Sigmoid colon (tissue), 7 donors: ENCODE measurements at regions of chr3 and their contacts with region 1.

Region 1: DNA sequence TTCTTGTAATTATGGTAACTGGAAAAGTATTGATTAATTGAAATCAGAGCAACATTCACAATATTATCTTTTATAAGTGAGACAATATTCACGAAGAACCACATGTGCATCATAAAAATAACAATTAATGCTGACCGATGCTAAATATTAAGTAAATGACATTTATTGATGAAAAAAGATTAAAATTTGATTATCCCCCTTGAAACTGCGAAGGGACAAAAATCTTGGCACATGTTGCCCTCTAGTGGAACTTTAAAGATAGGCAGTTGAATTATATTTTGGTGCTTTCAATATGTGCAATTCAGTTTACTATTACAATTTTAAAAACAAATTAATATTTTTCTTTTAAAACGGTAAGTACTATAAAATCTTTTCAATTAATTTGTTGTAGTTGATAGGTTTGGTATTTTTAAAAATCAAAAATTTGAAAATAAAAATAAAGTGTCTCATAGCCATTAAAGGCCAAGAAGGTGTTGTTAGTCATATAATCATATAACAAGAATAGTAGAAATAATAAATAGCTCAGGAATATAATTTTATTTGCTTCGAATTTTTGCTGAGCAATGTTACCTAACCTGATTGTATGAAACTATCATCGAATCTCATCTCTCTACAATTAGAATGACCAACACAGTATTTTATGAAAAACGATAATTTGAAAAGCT is 270.2 kb downstream of the ROBO1 start:
- DNase-seq: no peak
- H3K4me3 ChIP-seq: no peak overlapping the region
- H3K27ac ChIP-seq: no peak overlapping the region
- H3K4me1 ChIP-seq: no peaks in the 10 kb centered on the region
- H3K27me3 ChIP-seq: no peaks in the 10 kb centered on the region
- CTCF ChIP-seq: peak; percentile 14 to 72 (median 42)
- EP300 ChIP-seq: no peak
- POLR2A ChIP-seq: no peak

Region 2: GRCh38 chr3:78659386-78659987 is 838.1 kb before region 1 on chr3:
- intact Hi-C with region 1: loop called (anchors 5 kb)
- DNase-seq: no peak
- H3K4me3 ChIP-seq: no peak overlapping the region
- H3K27ac ChIP-seq: no peak overlapping the region
- H3K4me1 ChIP-seq: no peaks in the 10 kb centered on the region
- H3K27me3 ChIP-seq: no peaks in the 10 kb centered on the region
- CTCF ChIP-seq: peak; percentile 31 to 66 (median 56)
- EP300 ChIP-seq: no peak
- POLR2A ChIP-seq: no peak

Region 3: GRCh38 chr3:79369306-79369705 is 128.3 kb before region 1 on chr3:
- intact Hi-C with region 1: loop called (anchors 5 kb)
- DNase-seq: no peak
- H3K4me3 ChIP-seq: no peak overlapping the region
- H3K27ac ChIP-seq: no peak overlapping the region
- H3K4me1 ChIP-seq: peaks cover 0 to 25% (median 6%) of the 10 kb centered on the region in 4 donors
- H3K27me3 ChIP-seq: no peaks in the 10 kb centered on the region
- CTCF ChIP-seq: peak in 1 of 4 experiments; percentile 33
- EP300 ChIP-seq: no peak
- POLR2A ChIP-seq: no peak